ENCODE measurements at regions of chr12 and their contacts with region 1.

Region 1: GRCh38 chr12:100200463-100201181 is at the start of gene ACTR6:
- DNase-seq: peak; percentile 84 to 91 (median 88)
- H3K4me3 ChIP-seq: peak within 1 kb of the TSS; percentile 71 to 84 (median 81)
- H3K4me3 Mint-ChIP-seq: peak within 1 kb of the TSS; percentile 97 to 98
- H3K27ac ChIP-seq: peak within 1 kb of the TSS; percentile 38 to 79
- H3K27ac Mint-ChIP-seq: peak within 1 kb of the TSS; percentile 86 to 97 (median 95)
- H3K4me1 ChIP-seq: peaks cover 13 to 26% of the 10 kb centered on the region in 2 donors
- H3K4me1 Mint-ChIP-seq: peaks cover 17% of the 10 kb centered on the region
- H3K27me3 ChIP-seq: peaks cover 0 to 6% of the 10 kb centered on the region in 2 donors
- H3K27me3 Mint-ChIP-seq: peaks cover 5 to 6% (median 6%) of the 10 kb centered on the region in 3 donors
- CTCF ChIP-seq: no peak
- polyA plus RNA-seq, gene ACTR6: 5.5 to 17.8 (median 16.2) TPM

Region 2: GRCh38 chr12:100142851-100143559 is 57.6 kb before region 1 on chr12 and contains the start of gene BLTP3B:
- intact Hi-C with region 1: loop called in 1 of 2 experiments (anchors 5 kb)
- DNase-seq: peak; percentile 76 to 88 (median 88)
- H3K4me3 ChIP-seq: peak within 1 kb of the TSS; percentile 79 to 98 (median 91)
- H3K4me3 Mint-ChIP-seq: peak within 1 kb of the TSS; percentile 94 to 97
- H3K27ac ChIP-seq: peak within 1 kb of the TSS; percentile 91 to 98
- H3K27ac Mint-ChIP-seq: peak within 1 kb of the TSS; percentile 96 to 99 (median 98)
- H3K4me1 ChIP-seq: peaks cover 37 to 50% of the 10 kb centered on the region in 2 donors
- H3K4me1 Mint-ChIP-seq: peaks cover 45% of the 10 kb centered on the region
- H3K27me3 ChIP-seq: no peaks in the 10 kb centered on the region
- H3K27me3 Mint-ChIP-seq: peaks cover 0 to 4% (median 1%) of the 10 kb centered on the region in 3 donors
- CTCF ChIP-seq: no peak
- polyA plus RNA-seq, gene BLTP3B: 22.0 to 42.5 (median 33.4) TPM

Region 3: DNA sequence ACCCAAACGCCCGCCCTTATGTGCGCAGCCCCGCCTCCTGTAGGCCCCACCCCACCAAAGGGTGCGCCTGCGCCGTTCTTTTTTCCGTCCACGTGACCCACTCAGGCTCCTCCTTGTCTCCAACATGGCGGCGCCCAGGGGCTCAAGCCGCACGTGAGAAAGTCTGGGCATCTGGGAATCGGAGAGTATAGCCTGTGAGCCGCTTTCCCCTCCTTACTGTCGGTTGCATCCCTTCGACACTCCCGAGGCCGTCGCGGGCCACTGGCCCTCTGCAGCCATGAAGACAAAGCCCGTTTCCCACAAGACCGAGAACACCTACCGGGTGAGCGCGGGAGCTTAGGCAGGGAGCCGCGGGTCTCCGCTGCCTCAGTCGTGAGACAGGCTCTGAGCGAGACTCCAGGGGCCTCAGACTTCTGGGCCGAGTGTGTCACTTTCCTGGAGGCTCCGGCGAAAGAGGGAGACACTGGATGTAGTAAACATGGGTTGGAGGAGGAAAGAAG is 1079.4 kb after region 1 on chr12 and contains the start of gene UTP20:
- intact Hi-C with region 1: loop called in 1 of 2 experiments (anchors 10 kb)
- DNase-seq: peak; percentile 81 to 82 (median 81)
- H3K4me3 ChIP-seq: peak within 1 kb of the TSS; percentile 56 to 97 (median 90)
- H3K4me3 Mint-ChIP-seq: peak within 1 kb of the TSS; percentile 95 to 97
- H3K27ac ChIP-seq: peak within 1 kb of the TSS in 1 of 2 donors; percentile 61
- H3K27ac Mint-ChIP-seq: peak within 1 kb of the TSS in 5 of 7 donors; percentile 63 to 87 (median 74)
- H3K4me1 ChIP-seq: peaks cover 11 to 15% of the 10 kb centered on the region in 2 donors
- H3K4me1 Mint-ChIP-seq: peaks cover 12% of the 10 kb centered on the region
- H3K27me3 ChIP-seq: peaks cover 8 to 14% of the 10 kb centered on the region in 2 donors
- H3K27me3 Mint-ChIP-seq: peaks cover 2 to 14% (median 6%) of the 10 kb centered on the region in 3 donors
- CTCF ChIP-seq: no peak
- polyA plus RNA-seq, gene UTP20: 0.46 to 1.6 (median 1.2) TPM